BJ (cell line): ENCODE measurements at regions of chr15 and their contacts with region 1.

Region 1: DNA sequence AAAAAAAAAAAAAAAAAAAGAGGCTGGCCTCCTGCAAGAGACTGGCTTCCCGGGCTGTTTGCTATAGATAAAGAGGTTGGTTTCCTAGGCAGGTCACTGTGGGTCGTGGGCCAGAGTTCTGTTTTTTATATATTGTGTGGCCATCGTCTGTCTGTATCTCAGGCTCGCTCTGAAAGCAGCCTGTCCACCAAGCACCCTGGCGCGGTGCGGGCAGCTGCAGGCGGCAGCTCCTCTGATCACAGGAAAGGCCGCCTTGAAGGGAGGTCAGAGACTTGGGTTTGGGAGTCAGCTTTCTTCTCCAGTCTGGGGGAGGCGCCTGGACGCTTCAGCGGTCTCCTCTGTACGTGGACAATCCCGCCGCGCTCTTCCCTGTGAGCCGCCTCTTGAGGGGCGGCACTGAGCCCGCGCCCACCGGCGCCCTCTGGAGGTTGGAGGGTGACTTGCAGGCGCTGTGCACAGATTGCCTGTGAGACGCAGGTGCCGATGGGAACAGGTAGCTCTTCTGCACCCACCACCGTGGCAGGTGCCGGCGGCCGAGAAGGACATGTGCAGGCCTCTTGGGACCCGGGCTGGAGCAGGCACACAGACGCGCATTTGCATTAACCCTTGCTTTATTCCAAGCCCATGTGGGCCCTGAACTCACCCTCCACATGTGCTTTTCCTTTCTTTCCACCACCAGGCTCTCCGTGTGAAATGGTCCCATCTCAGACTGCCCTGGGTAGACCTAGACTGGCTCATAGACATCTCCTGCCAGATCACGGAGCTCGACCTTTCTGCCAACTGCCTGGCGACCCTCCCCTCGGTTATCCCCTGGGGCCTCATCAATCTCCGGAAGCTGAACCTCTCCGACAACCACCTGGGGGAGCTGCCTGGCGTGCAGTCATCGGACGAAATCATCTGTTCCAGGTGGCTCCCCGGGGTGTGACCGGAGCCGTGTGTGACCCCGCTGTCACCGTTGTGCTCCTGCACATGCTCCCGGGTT is 89.3 kb downstream of the LRRK1 start:
- DNase-seq: no peak
- H3K4me3 ChIP-seq: no peak overlapping the region
- H3K27me3 ChIP-seq: no peaks in the 10 kb centered on the region
- CTCF ChIP-seq: peak; percentile 72

Region 2: GRCh38 chr15:100627789-100628395 is 380.6 kb before region 1 on chr15:
- CTCF ChIA-PET with region 1: interaction called, 13 read pairs
- POLR2A ChIA-PET with region 1: no interaction called
- DNase-seq: peak; percentile 57
- H3K4me3 ChIP-seq: no peak overlapping the region
- H3K27me3 ChIP-seq: no peaks in the 10 kb centered on the region
- CTCF ChIP-seq: peak; percentile 70

Region 3: DNA sequence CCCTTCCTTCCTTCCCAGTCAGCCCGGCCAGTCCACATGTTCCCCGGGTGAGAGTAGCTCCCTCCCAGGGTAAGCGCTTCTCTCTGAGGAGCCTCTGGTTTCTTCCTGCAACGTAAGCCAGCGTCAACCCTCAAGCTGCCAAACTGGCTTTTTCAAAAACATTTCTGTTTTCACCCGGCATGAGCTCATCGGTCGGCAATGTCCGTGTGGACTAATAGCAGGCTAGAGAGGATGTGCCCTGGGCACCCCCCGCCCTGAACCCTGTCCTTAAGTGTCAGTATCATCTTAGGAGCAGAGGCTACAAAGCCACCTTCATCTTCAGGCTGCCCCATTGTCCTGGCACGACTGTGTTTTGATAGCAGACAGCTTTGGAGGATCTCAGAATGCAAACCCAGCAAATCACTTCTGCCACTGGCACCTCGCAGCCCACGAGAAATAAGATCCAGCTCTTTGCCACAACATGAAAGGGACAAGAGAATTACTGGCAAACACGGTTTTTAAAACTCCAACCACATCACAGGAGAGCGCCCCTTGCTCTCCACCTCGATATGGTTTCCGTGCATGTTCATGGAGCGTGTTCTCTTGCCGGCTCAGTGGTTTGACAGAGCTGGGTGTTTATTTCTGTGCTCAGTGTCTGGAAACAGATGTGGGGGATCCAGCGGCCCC is 118.9 kb before region 1 on chr15:
- CTCF ChIA-PET with region 1: interaction called, 11 read pairs
- POLR2A ChIA-PET with region 1: no interaction called
- DNase-seq: peak; percentile 65
- H3K4me3 ChIP-seq: no peak overlapping the region
- H3K27me3 ChIP-seq: no peaks in the 10 kb centered on the region
- CTCF ChIP-seq: no peak

Region 4: DNA sequence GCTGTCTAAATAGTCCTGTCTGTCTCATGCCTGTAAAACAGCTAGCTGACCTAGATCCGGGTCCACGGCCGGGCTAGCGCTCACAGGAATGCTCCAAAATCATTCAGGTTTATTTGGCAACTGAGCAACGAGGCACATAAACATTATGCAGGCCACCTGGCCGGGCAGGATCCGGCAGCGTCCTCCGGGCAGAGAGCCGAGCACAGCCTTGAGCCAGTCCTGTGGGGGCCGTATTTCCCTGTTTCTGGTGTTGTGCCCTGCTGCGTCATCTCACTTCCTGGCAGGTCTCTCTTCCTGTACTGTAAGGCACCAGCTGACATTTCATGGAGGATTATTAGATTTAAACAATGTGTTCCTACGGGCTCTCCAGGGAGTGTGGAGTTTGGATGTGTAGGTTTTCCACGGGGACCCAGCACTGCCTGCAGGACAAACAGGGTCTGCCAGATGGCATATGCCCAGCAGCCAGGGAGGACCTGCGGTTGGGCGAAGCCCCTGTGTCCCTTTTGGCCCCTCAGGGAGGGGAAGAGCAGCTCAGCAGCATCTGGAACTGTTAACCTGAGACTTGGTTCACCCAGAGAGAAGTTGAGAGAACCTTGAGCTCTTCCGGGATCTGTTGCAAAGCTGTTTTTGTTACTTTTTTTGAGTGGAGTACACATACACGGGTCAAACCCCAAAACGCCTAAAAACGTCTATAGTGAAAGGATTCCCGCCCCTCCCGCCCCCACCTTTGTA is 105.8 kb before region 1 on chr15:
- CTCF ChIA-PET with region 1: interaction called, 12 read pairs
- POLR2A ChIA-PET with region 1: no interaction called
- DNase-seq: peak; percentile 52
- H3K4me3 ChIP-seq: 0 out of 2 replicates have a peak overlapping the region, but pooled peaks have one; percentile 13
- H3K27me3 ChIP-seq: no peaks in the 10 kb centered on the region
- CTCF ChIP-seq: no peak

Region 5: DNA sequence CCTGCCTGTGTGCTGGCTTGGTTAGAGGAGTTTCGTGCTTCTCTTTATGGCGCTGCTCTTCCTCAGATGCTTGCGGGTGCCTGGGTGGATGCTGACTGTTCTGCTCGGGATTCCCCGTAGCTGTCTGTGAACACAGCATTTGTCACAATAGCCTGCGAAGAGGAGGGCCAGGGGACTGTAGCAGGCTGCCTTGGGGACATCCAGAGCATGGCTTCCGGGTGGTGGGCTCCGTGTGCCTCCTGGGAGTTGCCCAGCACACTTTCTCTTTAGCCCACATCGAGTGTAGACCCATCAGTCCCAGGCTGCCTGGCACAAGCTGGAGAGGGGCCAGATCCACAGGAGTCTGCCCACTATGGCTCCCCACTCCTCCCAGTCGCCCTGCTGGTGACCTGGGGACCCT is 66.9 kb before region 1 on chr15:
- CTCF ChIA-PET with region 1: interaction called, 22 read pairs
- POLR2A ChIA-PET with region 1: interaction called, 4 read pairs
- DNase-seq: no peak
- H3K4me3 ChIP-seq: no peak overlapping the region
- H3K27me3 ChIP-seq: no peaks in the 10 kb centered on the region
- CTCF ChIP-seq: no peak

Region 6: GRCh38 chr15:101088788-101089583 is 80.5 kb after region 1 on chr15:
- CTCF ChIA-PET with region 1: no interaction called
- POLR2A ChIA-PET with region 1: no interaction called
- DNase-seq: no peak
- H3K4me3 ChIP-seq: no peak overlapping the region
- H3K27me3 ChIP-seq: no peaks in the 10 kb centered on the region; the same call in 1 of the 2 replicates
- CTCF ChIP-seq: peak; percentile 79